Dendritic cell treated with granulocyte-macrophage colony-stimulating factor and Interleukin-4, amounts not matched to agents 40 ng/mL and 50 ng/mL, for 4 days (primary cell): ENCODE measurements at regions of chr2 and their contacts with region 1.

Region 1: DNA sequence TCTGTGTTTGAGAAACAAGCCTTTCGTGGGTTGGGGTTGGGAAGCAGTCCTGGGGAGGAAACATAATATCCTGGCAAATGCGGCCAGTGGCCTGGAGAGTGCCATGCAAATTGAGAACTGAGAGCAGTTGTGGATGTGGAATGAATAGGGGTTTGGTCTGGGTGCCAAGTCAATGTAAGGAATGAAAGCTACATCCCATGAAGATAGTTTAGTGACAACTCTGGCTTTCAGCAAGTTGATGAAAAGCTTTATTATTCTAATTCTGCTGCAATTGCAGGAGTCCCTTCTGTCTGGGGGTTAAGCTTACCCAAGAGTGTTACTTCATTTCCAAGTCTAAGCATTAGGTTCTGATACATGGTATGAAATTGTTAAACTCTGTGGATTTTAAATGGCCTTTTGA is 771.6 kb downstream of the DPP10 start:
- H3K4me3 Mint-ChIP-seq: no peak overlapping the region
- H3K27ac Mint-ChIP-seq: no peak overlapping the region
- H3K4me1 Mint-ChIP-seq: no peaks in the 10 kb centered on the region
- H3K27me3 Mint-ChIP-seq: no peaks in the 10 kb centered on the region

Region 2: GRCh38 chr2:114784890-114785583 is 429.0 kb before region 1 on chr2:
- intact Hi-C with region 1: loop called (anchors 10 kb)
- H3K4me3 Mint-ChIP-seq: no peak overlapping the region
- H3K27ac Mint-ChIP-seq: no peak overlapping the region
- H3K4me1 Mint-ChIP-seq: no peaks in the 10 kb centered on the region
- H3K27me3 Mint-ChIP-seq: no peaks in the 10 kb centered on the region

Region 3: GRCh38 chr2:114929225-114929624 is 284.8 kb before region 1 on chr2:
- intact Hi-C with region 1: no loop called
- H3K4me3 Mint-ChIP-seq: no peak overlapping the region
- H3K27ac Mint-ChIP-seq: no peak overlapping the region
- H3K4me1 Mint-ChIP-seq: no peaks in the 10 kb centered on the region
- H3K27me3 Mint-ChIP-seq: no peaks in the 10 kb centered on the region